ENCODE measurements at regions of chr10 and their contacts with region 1.

Region 1: GRCh38 chr10:34637418-34637911 is 177.6 kb downstream of the PARD3 start:
- DNase-seq: peak; percentile 52
- H3K4me3 ChIP-seq: no peak overlapping the region
- H3K27ac ChIP-seq: no peak overlapping the region
- H3K4me1 ChIP-seq: peaks cover 6% of the 10 kb centered on the region
- H3K27me3 ChIP-seq: no peaks in the 10 kb centered on the region
- CTCF ChIP-seq: peak; percentile 80 to 92 (median 83)
- POLR2A ChIP-seq: no peak

Region 2: DNA sequence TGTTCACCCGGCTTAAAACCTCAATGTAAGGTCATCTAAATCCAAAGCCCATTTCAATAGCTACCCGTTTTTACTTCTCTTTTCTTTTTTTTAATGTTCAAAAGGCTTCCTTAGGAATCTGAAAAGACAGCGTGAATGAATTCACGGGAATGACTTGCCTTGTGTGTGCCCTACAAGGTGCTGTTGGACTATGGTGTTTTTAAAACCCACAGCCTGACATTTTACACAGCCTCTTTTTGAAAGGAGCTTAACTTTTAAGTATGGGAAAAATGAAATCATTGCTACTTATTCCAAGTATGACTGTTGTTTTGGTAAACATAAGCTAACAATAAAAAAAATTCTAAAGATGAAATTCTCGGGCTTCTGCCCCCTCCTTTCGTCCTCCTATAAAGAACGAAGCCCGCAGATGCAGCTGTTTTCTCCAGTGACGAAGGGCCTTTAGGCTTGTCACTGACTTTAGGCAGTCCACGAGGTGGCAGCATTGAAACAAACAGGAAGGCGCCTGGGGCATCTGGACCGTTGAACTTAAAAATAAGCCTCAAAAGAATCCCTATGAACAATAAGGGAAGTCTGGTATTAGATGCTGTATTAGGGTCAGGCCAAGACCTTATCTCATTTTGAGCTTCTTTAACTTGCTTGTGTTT is 1444.3 kb before region 1 on chr10:
- intact Hi-C with region 1: loop called (anchors 5 kb)
- DNase-seq: peak; percentile 83
- H3K4me3 ChIP-seq: no peak overlapping the region
- H3K27ac ChIP-seq: peak overlapping the region; percentile 1 to 45
- H3K4me1 ChIP-seq: peaks cover 7% of the 10 kb centered on the region
- H3K27me3 ChIP-seq: no peaks in the 10 kb centered on the region
- CTCF ChIP-seq: peak; percentile 57 to 77 (median 75)
- POLR2A ChIP-seq: no peak

Region 3: DNA sequence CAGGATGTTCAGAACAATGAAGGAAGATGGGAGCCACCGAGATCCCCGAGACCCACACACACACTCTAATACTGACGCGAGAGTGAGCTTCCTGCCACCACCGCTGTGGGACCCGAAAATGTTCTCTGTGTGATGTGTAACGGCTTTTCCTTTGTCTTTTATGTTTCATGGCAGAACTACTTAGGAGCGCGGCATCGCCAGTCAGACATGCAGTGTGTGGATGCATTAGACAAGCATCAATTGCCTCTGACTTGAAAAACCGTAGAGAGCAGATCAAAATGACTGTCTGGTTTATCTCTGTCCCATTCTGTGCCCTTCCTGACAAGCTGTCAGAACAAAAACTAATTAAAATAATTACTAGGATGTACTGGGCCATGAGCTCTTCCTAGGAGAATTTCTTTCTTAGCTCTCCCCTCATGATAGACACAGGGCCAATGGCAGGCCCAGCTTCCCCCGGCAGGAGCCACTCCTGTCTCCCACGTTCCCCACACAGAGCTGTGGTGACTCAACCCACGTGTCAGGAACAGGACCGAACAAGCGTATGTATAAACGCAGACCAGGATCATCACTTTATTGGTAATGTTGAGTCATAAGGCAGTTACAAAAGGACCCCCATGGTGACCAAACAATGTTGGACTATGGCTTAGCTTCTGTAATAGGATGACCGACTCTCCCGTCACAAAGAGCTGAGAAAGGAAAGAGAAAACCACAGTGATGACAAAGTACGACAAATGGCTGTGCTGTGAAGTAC is 527.3 kb before region 1 on chr10:
- intact Hi-C with region 1: loop called (anchors 10 kb)
- DNase-seq: no peak
- H3K4me3 ChIP-seq: no peak overlapping the region
- H3K27ac ChIP-seq: no peak overlapping the region
- H3K4me1 ChIP-seq: no peaks in the 10 kb centered on the region
- H3K27me3 ChIP-seq: no peaks in the 10 kb centered on the region
- CTCF ChIP-seq: no peak
- POLR2A ChIP-seq: no peak

Region 4: GRCh38 chr10:34374356-34375045 is 263.0 kb before region 1 on chr10:
- intact Hi-C with region 1: no loop called
- DNase-seq: no peak
- H3K4me3 ChIP-seq: no peak overlapping the region
- H3K27ac ChIP-seq: no peak overlapping the region
- H3K4me1 ChIP-seq: no peaks in the 10 kb centered on the region
- H3K27me3 ChIP-seq: no peaks in the 10 kb centered on the region
- CTCF ChIP-seq: no peak
- POLR2A ChIP-seq: no peak

Region 5: DNA sequence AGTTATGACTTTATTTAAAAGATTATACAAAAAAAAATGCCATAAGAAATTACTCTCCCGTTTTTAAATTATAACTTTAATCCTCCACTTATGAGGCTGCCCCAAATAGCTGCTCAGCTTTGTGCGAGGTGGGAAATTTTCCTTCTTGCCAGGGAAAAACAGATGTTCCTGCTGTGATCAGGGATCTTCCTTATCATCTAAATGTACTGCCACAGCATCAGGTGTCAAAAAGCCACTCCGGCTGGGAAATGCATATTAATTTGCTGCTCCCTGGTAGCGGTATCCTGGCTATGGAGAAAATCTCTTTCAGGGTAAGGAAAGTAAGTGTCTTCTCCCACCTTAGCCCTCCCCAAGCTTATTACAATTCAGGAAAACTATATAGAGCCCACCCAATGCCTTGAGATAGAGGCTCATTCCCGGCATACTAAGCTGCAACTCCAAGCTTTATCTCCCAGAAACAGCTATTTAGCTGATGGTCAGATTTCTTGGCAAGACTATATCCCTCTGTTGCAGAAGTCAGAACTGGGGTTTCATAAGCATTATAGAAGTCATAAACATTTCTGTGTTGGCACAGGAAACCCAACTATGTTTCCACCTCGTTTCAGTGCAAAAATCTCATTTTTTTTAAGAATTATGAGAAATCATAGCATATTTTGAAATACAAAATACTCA is 182.7 kb before region 1 on chr10:
- intact Hi-C with region 1: no loop called
- DNase-seq: no peak
- H3K4me3 ChIP-seq: no peak overlapping the region
- H3K27ac ChIP-seq: no peak overlapping the region
- H3K4me1 ChIP-seq: no peaks in the 10 kb centered on the region
- H3K27me3 ChIP-seq: no peaks in the 10 kb centered on the region
- CTCF ChIP-seq: no peak
- POLR2A ChIP-seq: no peak

Region 6: DNA sequence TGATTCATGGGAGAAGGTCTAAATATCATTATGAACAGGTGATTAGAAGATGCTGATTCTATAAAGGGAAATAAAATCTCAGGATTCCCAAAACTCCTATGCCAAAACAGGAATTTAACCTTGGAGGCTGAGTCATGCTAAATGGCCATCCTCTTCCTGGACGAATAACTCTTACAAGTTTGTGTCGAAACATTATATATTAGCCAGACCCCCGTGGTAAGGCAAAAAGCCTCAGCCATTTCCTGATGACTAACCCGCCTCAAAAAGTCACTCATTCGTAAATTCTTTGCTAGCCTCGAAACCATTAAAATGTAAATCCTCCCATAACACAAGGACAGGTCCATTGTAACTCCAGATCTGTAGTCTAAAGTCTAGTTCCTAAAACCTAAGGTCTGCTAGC is 420.7 kb after region 1 on chr10:
- intact Hi-C with region 1: no loop called
- DNase-seq: no peak
- H3K4me3 ChIP-seq: no peak overlapping the region
- H3K27ac ChIP-seq: no peak overlapping the region
- H3K4me1 ChIP-seq: no peaks in the 10 kb centered on the region
- H3K27me3 ChIP-seq: no peaks in the 10 kb centered on the region
- CTCF ChIP-seq: no peak
- POLR2A ChIP-seq: no peak

Measured in prostate gland (tissue), 2 donors.